Activated T-helper 2 cell treated with anti-CD3 and anti-CD28 coated beads, Interferon-gamma antibody, Interleukin-2, Interleukin-4, amounts not matched to agents 10 μg/mL and 5 μg/mL and 100 μg/mL, durations not matched to agents 14 hours and 24 hours and 36 hours (primary cell): ENCODE measurements at regions of chr9 and their contacts with region 1.

Region 1: DNA sequence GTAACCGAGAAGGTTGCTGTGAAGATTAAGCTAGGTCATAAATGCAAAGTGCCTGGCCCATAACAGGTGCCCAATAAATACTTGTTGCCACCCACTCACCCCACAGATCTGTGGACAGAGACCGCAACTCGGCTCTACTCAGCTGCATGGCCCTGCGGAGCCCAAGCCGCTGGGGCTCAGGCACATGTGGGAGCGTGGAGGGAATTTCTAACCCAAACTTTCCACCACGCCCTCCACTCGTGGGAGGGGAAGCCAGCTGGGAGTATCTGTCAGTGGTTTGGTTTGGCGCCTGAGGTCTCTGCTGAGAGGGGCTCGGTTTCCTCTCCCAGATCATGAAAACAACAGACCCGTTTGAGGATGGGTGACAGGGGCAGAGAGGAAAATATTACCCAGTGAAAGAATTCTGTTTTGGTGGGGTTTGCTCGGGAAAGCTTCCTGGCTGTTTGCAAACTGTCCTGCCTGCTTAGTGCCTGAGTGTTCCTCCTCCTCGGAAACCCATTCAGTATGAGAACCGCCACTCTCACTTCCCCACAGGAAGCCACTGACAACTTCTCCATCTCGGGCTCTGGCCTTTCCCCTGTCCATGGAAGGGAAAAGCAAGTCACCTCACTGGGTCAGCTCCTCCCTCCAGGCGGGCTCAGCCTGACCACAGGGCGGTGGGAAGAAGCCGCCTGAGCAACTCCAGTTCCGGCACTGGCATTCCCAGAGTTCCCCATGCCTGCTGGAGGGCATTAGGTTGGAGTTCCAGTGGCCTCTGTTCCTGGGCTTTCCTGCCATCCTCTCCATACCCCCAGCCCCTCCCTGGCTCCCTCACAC is 60.1 kb downstream of the RGS3 start:
- DNase-seq: peak; percentile 33
- H3K4me3 Mint-ChIP-seq: peak overlapping the region; percentile 62
- H3K27ac Mint-ChIP-seq: peak overlapping the region; percentile 65
- H3K4me1 Mint-ChIP-seq: peaks cover 70% of the 10 kb centered on the region
- H3K27me3 Mint-ChIP-seq: no peaks in the 10 kb centered on the region

Region 2: GRCh38 chr9:113446323-113446740 is 77.3 kb before region 1 on chr9:
- intact Hi-C with region 1: loop called (anchors 2 kb)
- DNase-seq: no peak
- H3K4me3 Mint-ChIP-seq: no peak overlapping the region
- H3K27ac Mint-ChIP-seq: no peak overlapping the region
- H3K4me1 Mint-ChIP-seq: peaks cover 3% of the 10 kb centered on the region
- H3K27me3 Mint-ChIP-seq: no peaks in the 10 kb centered on the region

Region 3: GRCh38 chr9:113468716-113469448 is 54.7 kb before region 1 on chr9:
- intact Hi-C with region 1: no loop called
- DNase-seq: no peak
- H3K4me3 Mint-ChIP-seq: no peak overlapping the region
- H3K27ac Mint-ChIP-seq: no peak overlapping the region
- H3K4me1 Mint-ChIP-seq: peaks cover 15% of the 10 kb centered on the region
- H3K27me3 Mint-ChIP-seq: no peaks in the 10 kb centered on the region

Region 4: DNA sequence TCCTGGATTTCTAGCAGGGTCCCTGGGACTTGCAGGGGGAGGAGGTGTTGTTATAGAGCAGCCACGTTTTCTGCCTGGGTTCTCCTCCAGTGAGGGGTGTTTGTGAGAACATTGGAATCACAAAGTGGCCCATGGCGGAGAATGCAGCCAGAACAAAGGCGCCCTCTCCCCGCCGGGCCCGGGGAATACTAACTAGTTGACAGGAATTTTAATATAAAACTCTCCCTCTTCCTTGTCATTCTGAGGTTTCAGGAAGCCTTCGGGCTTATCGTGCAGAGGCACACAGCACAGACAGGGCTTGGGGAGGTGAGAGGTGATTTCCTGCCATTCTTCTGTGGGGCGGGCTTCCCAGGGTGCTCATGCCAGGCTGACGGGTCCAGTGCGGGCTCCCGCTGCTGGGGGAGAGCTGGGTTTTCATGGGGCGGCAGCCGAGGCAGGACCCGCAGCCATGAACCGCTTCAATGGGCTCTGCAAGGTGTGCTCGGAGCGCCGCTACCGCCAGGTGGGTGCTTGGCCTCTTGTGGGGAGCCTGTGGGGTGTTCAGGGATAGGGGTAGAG is 22.4 kb before region 1 on chr9:
- intact Hi-C with region 1: no loop called
- DNase-seq: no peak
- H3K4me3 Mint-ChIP-seq: no peak overlapping the region
- H3K27ac Mint-ChIP-seq: no peak overlapping the region
- H3K4me1 Mint-ChIP-seq: peaks cover 3% of the 10 kb centered on the region
- H3K27me3 Mint-ChIP-seq: no peaks in the 10 kb centered on the region

Region 5: GRCh38 chr9:113511856-113512761 is 11.5 kb before region 1 on chr9:
- intact Hi-C with region 1: loop called (anchors 1 kb)
- DNase-seq: peak; percentile 66
- H3K4me3 Mint-ChIP-seq: peak overlapping the region; percentile 54
- H3K27ac Mint-ChIP-seq: peak overlapping the region; percentile 96
- H3K4me1 Mint-ChIP-seq: peaks cover 56% of the 10 kb centered on the region
- H3K27me3 Mint-ChIP-seq: peaks cover 4% of the 10 kb centered on the region

Region 6: DNA sequence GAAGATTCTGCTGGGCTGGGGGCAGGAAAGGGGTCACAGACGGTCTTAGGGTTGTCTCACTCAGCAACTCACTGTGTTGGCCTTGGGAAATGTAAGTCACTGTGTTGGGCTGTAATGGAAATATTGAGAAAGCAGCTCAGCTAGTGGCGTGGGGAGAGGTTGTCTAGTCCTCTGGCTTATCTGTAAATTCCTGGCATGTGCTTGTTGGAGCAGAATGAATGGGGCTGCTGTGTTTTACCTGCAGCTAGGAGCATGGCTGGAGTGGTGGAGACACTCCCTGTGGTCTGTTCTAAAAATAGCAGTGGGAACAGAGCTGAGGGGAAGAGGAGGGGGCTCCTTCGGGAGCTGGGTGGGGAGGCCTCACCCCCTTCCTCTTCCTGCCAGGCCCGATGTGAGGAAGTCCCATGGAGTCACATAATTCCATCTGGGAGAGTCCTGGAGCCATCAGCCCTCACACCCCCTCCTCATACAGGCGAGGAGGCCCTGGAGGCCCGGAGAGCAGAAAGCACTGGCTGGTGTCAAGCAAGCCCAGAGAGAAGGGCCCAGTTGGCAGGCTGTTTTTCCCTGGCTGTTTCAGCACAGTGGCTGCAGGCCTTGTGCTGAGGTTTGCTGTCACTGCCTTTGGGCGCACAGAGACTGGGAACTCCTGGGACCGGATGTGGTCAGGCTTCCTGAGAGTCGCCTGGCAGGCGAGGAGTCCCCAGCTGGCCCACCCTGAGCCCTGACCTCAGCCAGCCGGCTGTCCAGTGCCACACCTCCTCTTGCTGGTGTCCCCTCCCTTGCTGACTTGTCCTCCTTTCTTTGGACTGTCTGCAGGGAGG is 24.8 kb after region 1 on chr9:
- intact Hi-C with region 1: loop called (anchors 1 kb)
- DNase-seq: no peak
- H3K4me3 Mint-ChIP-seq: no peak overlapping the region
- H3K27ac Mint-ChIP-seq: peak overlapping the region; percentile 82
- H3K4me1 Mint-ChIP-seq: peaks cover 22% of the 10 kb centered on the region
- H3K27me3 Mint-ChIP-seq: no peaks in the 10 kb centered on the region